Activated T-helper 1 cell treated with anti-CD3 and anti-CD28 coated beads, Interleukin-12 subunit alpha, Interleukin-12 subunit beta, Interleukin-2, Interleukin-4 antibody, amounts not matched to agents 30 ng/mL and 10 ng/mL and 1 ng/mL, durations not matched to agents 14 hours and 24 hours and 36 hours (primary cell): ENCODE measurements at regions of chrX and their contacts with region 1.

Region 1: GRCh38 chrX:154775419-154776349 is 13.0 kb downstream of the DKC1 start:
- DNase-seq: no peak
- H3K4me3 Mint-ChIP-seq: peak overlapping the region; percentile 24
- H3K27ac Mint-ChIP-seq: peak overlapping the region; percentile 57
- H3K4me1 Mint-ChIP-seq: peaks cover 23% of the 10 kb centered on the region
- H3K27me3 Mint-ChIP-seq: no peaks in the 10 kb centered on the region

Region 2: GRCh38 chrX:154804957-154805695 is 29.4 kb after region 1 on chrX and contains the start of gene MPP1:
- intact Hi-C with region 1: loop called (anchors 1 kb)
- DNase-seq: peak; percentile 73
- H3K4me3 Mint-ChIP-seq: peak within 1 kb of the TSS; percentile 82
- H3K27ac Mint-ChIP-seq: peak within 1 kb of the TSS; percentile 63
- H3K4me1 Mint-ChIP-seq: peaks cover 45% of the 10 kb centered on the region
- H3K27me3 Mint-ChIP-seq: no peaks in the 10 kb centered on the region
- total RNA-seq, gene MPP1: 27.8 and 28.7 TPM in 2 replicates

Region 3: DNA sequence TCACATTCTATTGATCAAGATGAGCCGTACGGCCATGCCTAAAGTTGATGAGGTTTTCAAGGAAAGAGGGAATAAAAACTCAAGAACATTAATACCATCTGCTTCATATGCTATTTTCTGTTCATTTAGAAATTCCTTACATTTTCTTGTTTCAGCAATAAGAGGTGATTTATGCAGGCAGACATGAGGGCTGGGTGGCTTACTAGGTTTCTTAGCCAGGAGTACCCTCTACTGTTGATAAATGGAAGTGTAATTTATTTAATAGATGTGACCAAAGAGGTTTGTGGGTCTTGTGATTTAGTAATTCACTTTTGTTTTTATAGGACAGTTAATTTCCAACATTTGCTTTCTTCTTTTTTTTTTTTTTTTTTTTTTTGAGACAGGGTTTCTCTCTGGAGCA is 65.2 kb after region 1 on chrX:
- intact Hi-C with region 1: loop called (anchors 2 kb)
- DNase-seq: no peak
- H3K4me3 Mint-ChIP-seq: no peak overlapping the region
- H3K27ac Mint-ChIP-seq: no peak overlapping the region
- H3K4me1 Mint-ChIP-seq: peaks cover 8% of the 10 kb centered on the region
- H3K27me3 Mint-ChIP-seq: peaks cover 6% of the 10 kb centered on the region

Region 4: GRCh38 chrX:155001873-155002272 is 226.2 kb after region 1 on chrX:
- intact Hi-C with region 1: no loop called
- DNase-seq: no peak
- H3K4me3 Mint-ChIP-seq: no peak overlapping the region
- H3K27ac Mint-ChIP-seq: no peak overlapping the region
- H3K4me1 Mint-ChIP-seq: no peaks in the 10 kb centered on the region
- H3K27me3 Mint-ChIP-seq: peaks cover 7% of the 10 kb centered on the region